Ascending aorta (tissue), 2 donors: ENCODE measurements at regions of chr16 and their contacts with region 1.

Region 1: DNA sequence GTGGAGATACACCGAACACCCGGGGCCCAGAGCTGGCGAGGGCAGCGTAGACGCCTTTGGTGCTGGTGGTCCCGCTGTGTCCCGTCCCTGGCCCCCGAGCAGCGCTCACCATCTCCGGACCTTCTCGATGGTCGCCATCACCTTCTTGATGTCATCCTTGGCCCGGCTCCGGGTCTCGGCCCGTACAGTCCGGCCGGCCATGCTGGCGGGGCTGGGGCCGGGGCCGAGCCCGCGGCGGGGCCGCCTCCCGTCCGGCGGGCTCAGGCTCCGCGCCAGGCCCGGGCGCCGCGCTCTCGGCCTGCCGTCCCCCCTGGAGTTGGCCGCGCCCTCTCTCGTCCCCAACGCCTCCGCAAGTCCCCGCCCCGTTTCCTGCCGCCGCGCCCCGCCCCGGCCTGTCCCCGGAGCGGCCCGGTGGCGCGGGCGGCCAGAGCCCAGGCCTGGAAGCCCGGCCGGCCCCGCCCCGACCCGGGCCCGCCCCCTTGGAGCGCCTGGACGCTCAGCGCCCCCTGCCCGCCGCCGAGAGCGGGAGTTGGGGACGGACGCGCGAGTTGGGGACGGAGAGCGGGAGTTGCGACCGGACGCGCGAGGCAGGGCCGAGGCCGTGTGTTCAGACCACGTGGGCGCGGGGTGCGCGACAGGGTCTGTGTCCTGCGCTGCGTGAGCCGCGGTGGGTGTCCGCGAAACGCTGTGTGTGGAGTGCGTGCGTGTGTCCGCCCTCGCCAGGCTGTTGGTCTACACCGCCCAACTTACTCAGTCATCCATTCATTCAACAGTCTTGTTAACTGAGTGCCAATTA is at the start of gene BCL7C:
- DNase-seq: peak; percentile 70 to 96
- H3K4me3 ChIP-seq: peak within 1 kb of the TSS; percentile 87 to 93
- H3K27ac ChIP-seq: peak within 1 kb of the TSS; percentile 99
- H3K4me1 ChIP-seq: peaks cover 20 to 32% of the 10 kb centered on the region in 2 donors
- H3K27me3 ChIP-seq: no peaks in the 10 kb centered on the region
- CTCF ChIP-seq: peak; percentile 24 to 61 (median 53)
- total RNA-seq, gene BCL7C: 46.2 TPM

Region 2: GRCh38 chr16:30698139-30698815 is 195.7 kb before region 1 on chr16:
- intact Hi-C with region 1: loop called (anchors 2 kb)
- DNase-seq: peak; percentile 94 to 99
- H3K4me3 ChIP-seq: peak overlapping the region; percentile 89 to 90
- H3K27ac ChIP-seq: peak overlapping the region; percentile 97 to 100
- H3K4me1 ChIP-seq: peaks cover 8 to 16% of the 10 kb centered on the region in 2 donors
- H3K27me3 ChIP-seq: no peaks in the 10 kb centered on the region
- CTCF ChIP-seq: no peak

Region 3: DNA sequence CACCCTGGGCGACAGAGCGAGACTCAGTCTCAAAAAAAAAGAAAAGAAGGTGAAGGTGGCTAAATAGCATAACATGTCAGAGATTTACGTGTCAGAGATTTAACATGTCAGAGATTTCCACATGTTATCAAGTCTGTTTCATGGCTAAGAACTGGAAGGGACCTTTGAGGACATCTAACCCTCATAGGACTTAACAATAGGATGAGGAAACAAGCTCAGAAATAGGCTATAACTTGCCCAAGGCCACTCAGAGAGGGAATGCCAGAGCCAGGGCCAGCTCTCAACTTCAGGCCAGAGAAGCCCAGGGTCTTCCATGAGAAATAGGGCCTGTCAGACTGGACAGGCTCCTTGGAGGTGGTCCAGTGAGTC is 80.1 kb before region 1 on chr16:
- intact Hi-C with region 1: loop called (anchors 2 kb)
- DNase-seq: no peak
- H3K4me3 ChIP-seq: peak overlapping the region; percentile 58 to 66
- H3K27ac ChIP-seq: peak overlapping the region; percentile 56 to 79
- H3K4me1 ChIP-seq: peaks cover 5 to 8% of the 10 kb centered on the region in 2 donors
- H3K27me3 ChIP-seq: no peaks in the 10 kb centered on the region
- CTCF ChIP-seq: no peak

Region 4: GRCh38 chr16:30844671-30845449 is 49.1 kb before region 1 on chr16:
- intact Hi-C with region 1: loop called (anchors 2 kb)
- DNase-seq: peak in 1 of 2 donors; percentile 89
- H3K4me3 ChIP-seq: peak overlapping the region; percentile 17 to 59
- H3K27ac ChIP-seq: peak overlapping the region in 1 of 2 donors; percentile 48
- H3K4me1 ChIP-seq: peaks cover 3 to 6% of the 10 kb centered on the region in 2 donors
- H3K27me3 ChIP-seq: no peaks in the 10 kb centered on the region
- CTCF ChIP-seq: peak; percentile 69 to 91 (median 82)

Region 5: DNA sequence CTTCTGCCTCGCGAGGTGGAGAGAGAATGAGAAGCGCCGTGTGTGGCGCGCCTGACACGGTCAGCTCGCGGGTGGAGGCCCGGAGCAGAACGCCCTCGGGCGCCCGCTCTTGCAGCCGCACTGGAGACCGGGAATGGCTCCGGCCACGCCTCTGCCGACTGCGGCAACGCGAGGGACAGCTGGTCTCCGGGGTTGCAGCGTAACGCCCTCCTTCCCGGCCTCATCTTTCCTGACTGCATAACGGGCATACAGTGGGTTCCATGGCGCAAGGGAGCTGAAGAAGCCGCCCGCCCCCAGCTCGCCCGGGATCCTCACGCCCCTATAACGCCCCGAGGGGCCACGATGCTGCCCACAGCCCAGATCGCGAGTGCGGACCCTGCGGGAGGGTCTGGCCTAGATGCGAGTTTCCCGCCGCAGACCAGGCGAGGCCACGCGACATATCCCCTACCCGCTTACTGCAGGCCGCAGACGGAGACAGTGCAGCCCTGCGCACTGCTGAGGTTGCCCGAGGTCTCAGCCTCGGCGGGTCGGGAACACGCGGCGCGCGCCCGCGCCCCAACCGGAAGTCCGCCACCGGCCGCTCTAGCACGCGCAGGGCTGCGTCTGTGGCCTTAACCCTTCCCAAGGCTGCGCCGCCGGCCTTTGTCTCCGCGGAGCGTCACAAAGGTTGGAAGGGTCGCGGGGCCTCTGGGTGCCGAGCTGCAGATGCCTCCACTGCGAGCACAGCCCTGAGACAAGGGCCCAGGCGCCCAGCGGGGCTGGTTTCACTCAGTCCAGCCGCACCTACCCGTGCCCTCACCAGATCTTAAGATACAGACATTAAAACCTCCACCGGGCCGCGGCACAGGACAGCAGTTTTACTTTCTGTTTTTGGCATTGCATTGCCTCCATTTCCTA is 18.9 kb before region 1 on chr16:
- intact Hi-C with region 1: loop called (anchors 1 kb)
- DNase-seq: peak; percentile 39 to 94
- H3K4me3 ChIP-seq: peak overlapping the region; percentile 69 to 84
- H3K27ac ChIP-seq: peak overlapping the region; percentile 76 to 79
- H3K4me1 ChIP-seq: peaks cover 3 to 17% of the 10 kb centered on the region in 2 donors
- H3K27me3 ChIP-seq: no peaks in the 10 kb centered on the region
- CTCF ChIP-seq: no peak

Region 6: DNA sequence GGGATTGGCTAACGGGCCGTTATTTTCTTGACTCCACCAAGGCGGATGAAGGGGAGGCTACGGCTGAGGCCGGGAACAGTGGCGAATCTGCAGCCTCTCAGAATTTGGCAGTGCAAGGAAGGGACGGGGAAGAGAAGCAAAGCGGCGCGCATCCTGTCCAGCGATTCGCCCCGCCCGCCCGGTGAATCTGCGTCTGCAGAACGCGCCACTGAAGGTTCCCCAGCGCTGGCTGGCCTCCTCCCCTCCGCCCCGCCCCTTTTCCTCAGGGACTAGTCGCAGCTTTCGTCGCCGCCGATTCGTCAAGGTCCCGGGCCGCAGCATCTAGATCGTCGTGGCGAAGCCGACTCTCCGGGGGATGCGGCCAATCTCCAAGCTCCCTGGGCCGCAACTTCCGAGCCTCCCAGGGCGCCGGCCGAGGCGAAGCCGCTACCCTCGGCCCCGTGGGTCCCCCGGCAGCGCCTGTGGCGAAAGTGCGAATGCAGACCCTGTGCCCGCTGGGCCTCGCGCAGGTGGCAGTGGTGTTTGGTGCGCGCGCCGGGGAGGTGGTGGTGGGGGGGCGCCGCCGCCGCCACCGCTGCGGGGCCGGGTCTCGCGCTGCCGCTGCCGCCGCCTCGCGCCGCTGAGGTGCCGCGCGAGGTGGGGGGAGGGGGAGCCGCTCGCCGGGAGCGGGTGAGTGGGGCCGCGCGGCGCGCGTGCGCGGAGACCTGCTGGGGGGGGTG is 63.7 kb after region 1 on chr16 and contains the start of gene SETD1A:
- intact Hi-C with region 1: loop called (anchors 2 kb)
- DNase-seq: peak; percentile 81 to 98
- H3K4me3 ChIP-seq: peak within 1 kb of the TSS; percentile 94 to 95
- H3K27ac ChIP-seq: peak within 1 kb of the TSS; percentile 98 to 99
- H3K4me1 ChIP-seq: peaks cover 3 to 22% of the 10 kb centered on the region in 2 donors
- H3K27me3 ChIP-seq: no peaks in the 10 kb centered on the region
- CTCF ChIP-seq: peak in 1 of 3 experiments; percentile 11
- total RNA-seq, gene SETD1A: 8.3 TPM